ENCODE measurements at regions of chr5 and their contacts with region 1.

Region 1: DNA sequence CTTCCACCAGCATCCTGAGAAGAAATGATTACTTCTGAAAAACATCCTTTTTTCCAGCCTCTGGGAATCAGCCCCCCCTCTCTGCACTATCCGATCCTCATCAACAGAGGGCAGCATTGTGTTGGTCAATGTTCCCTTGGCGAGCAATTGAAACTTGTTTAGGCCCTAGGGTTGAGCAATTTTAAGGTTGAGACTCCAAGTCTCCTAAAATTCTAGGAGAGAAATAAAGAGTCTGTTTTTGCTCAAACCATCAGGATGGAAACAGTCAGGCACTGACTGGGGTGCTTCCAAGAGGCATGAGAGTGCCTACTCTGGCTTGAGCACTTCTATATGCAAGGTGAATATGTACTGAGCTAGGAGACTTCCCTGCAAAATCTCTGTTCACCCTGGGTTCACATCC is 12.4 kb upstream of the CYFIP2 start:
- DNase-seq: no peak
- H3K4me3 ChIP-seq: no peak overlapping the region
- CTCF ChIP-seq: peak; percentile 86

Region 2: GRCh38 chr5:156800929-156801328 is 452.6 kb before region 1 on chr5:
- CTCF ChIA-PET with region 1: no interaction called
- POLR2A ChIA-PET with region 1: no interaction called
- DNase-seq: no peak
- H3K4me3 ChIP-seq: no peak overlapping the region
- CTCF ChIP-seq: no peak

Region 3: DNA sequence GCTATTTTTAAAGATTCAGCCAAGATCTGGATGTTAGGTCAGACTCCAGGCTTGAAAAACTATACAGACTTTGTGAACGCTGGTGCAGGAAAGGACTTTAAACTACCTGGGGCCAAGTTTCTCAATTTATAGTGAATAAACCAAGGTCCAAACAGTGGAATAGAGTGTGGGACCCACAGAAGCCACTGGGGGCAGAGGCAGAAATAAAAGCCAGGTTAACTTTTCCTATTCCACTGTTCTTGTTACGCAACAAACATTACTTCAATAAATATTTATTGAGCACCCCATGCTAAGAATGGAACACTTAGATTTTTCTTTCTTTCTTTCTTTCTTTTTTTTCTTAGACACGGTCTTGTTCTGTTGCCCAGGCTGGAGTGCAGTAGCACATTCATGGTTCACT is 183.6 kb before region 1 on chr5:
- CTCF ChIA-PET with region 1: no interaction called
- POLR2A ChIA-PET with region 1: no interaction called
- DNase-seq: no peak
- H3K4me3 ChIP-seq: no peak overlapping the region
- CTCF ChIP-seq: no peak

Region 4: GRCh38 chr5:157198277-157198986 is 55.1 kb before region 1 on chr5:
- CTCF ChIA-PET with region 1: no interaction called
- POLR2A ChIA-PET with region 1: no interaction called
- DNase-seq: no peak
- H3K4me3 ChIP-seq: no peak overlapping the region
- CTCF ChIP-seq: no peak

Region 5: DNA sequence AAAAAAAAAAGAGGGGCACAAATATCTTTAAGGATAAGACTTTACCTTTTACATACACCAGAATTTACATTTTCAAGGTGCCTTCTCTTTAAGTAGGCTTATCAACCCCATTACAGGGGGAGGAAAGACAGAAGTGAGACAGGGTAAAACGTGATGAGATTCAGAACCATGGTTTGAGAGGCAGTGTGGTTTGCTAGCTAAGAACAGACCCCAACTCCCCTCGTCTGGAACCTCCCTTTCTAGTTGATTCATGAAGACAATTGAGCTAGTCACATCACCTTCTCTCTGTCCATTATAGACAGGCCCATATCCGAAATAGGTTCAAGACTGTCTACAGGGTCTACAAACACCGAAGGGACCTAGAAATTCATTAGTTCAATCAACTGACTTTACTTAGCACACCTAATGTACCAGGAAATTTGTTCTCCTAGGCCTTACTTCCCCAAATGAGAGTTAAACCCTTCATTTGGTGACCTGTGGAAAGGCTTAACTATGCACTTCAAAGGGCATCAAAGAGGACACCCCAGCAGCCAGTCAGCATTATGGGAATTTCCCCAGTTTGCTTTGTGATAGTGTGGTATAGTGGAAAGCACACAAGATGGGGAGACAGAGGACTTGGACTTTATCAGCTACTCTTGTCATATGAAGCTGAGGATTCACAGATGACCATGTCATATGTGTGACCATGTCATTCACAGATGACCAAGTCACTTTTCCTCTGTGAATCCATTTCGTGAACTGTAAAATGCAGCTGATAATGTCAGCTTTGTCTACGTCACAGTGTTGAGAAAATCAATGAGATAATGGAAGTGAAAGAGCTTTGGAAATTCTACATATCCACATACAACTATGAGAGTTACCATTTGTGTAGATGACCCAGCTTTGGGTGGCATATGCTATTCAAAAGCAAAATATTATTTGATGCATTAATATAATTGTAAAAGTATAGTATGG is 27.8 kb before region 1 on chr5:
- CTCF ChIA-PET with region 1: interaction called, 13 read pairs
- POLR2A ChIA-PET with region 1: no interaction called
- DNase-seq: no peak
- H3K4me3 ChIP-seq: no peak overlapping the region
- CTCF ChIP-seq: no peak

Region 6: DNA sequence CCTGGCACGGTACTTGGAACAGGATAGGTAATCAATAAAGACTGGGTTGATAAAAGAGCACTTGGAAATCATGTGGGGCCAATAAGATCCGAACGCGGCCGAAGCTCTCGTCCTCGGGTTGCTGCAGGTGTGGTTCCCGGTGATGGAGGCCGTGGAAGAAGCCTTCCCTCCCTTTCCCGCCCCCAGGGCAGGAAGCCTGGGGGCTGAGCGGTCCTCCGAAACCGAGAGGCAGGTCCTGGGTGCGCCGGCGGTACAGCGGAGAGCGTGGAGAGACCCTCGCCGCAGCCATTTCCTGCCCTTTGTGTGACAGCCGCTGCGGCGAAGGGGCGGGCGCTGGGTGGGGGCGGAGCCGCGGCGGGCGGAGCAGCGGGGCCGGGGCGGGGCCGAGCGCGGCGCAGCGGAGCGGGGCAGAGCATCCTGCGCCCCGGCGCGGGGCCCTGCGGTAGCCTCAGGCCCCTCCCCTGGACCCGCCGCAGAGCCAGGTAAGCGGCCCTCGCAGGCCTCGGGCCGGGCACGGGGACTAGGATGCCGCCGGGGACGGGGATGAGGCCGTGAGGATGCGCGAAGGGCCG is 12.3 kb after region 1 on chr5 and contains the start of gene CYFIP2:
- CTCF ChIA-PET with region 1: interaction called, 74 read pairs
- POLR2A ChIA-PET with region 1: no interaction called
- DNase-seq: no peak
- H3K4me3 ChIP-seq: peak within 1 kb of the TSS; percentile 67
- CTCF ChIP-seq: no peak

Region 7: GRCh38 chr5:157280927-157281326 is 27.4 kb after region 1 on chr5:
- CTCF ChIA-PET with region 1: interaction called, 17 read pairs
- POLR2A ChIA-PET with region 1: no interaction called
- DNase-seq: peak; percentile 42
- H3K4me3 ChIP-seq: no peak overlapping the region
- CTCF ChIP-seq: no peak

Region 8: GRCh38 chr5:157312492-157312891 is 58.9 kb after region 1 on chr5:
- CTCF ChIA-PET with region 1: interaction called, 185 read pairs
- POLR2A ChIA-PET with region 1: interaction called, 3 read pairs
- DNase-seq: no peak
- H3K4me3 ChIP-seq: no peak overlapping the region
- CTCF ChIP-seq: peak; percentile 81

Region 9: GRCh38 chr5:157365732-157366131 is 112.2 kb after region 1 on chr5:
- CTCF ChIA-PET with region 1: no interaction called
- POLR2A ChIA-PET with region 1: no interaction called
- DNase-seq: no peak
- H3K4me3 ChIP-seq: no peak overlapping the region
- CTCF ChIP-seq: no peak

Measured in AG04449 (cell line).